Activated naive CD4-positive, alpha-beta T cell treated with anti-CD3 and anti-CD28 coated beads for 36 hours (primary cell): ENCODE measurements at regions of chr4 and their contacts with region 1.

Region 1: GRCh38 chr4:102578819-102579218 is 77.7 kb downstream of the NFKB1 start:
- DNase-seq: peak; percentile 24
- H3K4me3 Mint-ChIP-seq: no peak overlapping the region
- H3K27ac Mint-ChIP-seq: no peak overlapping the region
- H3K4me1 Mint-ChIP-seq: peaks cover 65% of the 10 kb centered on the region
- H3K27me3 Mint-ChIP-seq: no peaks in the 10 kb centered on the region

Region 2: DNA sequence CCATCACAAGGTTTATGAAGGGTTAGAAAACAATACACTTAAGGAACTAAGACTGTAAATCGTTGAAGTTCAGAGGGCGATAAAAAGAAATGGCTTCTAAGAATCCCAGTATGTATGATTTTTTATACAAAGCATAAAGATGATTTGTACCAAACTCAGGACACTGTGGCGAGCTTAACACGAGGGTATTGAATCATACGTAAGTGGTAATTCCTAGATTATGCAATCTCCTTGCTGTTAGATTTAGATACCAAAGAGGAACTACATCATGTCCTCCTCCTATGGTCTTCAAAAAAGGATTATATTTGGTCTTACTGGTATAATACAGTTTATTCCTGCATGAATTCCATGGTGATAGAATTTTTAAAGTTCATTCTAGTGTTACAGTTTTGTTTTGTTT is 53.7 kb before region 1 on chr4:
- CTCF ChIA-PET with region 1: interaction called, 3 read pairs
- intact Hi-C with region 1: loop called (anchors 2 kb)
- DNase-seq: peak; percentile 22
- H3K4me3 Mint-ChIP-seq: peak overlapping the region; percentile 47
- H3K27ac Mint-ChIP-seq: peak overlapping the region; percentile 83
- H3K4me1 Mint-ChIP-seq: peaks cover 88% of the 10 kb centered on the region
- H3K27me3 Mint-ChIP-seq: no peaks in the 10 kb centered on the region

Region 3: DNA sequence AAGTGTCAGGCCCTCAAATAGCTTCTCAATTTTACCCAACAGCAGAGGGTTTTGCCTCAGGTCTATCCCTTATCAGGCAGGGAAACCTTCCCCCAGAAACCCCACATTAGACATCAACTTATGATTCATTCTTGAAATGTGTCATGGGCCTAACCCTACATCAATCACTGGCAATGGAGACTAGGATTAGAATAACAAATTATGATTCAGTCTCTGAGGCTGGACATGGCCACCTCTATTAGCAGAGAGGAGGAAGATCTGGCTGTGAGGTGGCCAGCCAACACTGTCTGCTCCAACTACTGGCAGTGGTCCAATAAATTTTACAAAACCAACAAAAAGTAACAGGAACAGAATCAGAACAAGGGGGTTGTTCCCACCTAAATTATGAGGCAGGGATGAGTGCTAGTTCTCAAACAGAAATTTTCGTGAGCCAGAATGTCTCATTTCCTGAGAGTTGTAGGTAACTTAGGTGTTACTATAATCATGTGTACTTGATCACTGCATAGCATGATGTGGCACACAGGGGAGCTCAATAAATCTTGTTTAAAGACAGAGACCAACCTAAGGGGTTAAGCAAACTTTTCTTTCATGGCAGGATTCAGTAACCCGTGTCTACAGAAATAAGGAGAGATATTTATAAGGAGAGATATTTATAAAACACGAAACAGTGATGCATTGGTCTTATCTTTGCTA is 49.2 kb after region 1 on chr4:
- CTCF ChIA-PET with region 1: interaction called, 5 read pairs
- intact Hi-C with region 1: loop called (anchors 1 kb)
- DNase-seq: peak; percentile 62
- H3K4me3 Mint-ChIP-seq: peak overlapping the region; percentile 22
- H3K27ac Mint-ChIP-seq: peak overlapping the region; percentile 54
- H3K4me1 Mint-ChIP-seq: peaks cover 75% of the 10 kb centered on the region
- H3K27me3 Mint-ChIP-seq: no peaks in the 10 kb centered on the region

Region 4: DNA sequence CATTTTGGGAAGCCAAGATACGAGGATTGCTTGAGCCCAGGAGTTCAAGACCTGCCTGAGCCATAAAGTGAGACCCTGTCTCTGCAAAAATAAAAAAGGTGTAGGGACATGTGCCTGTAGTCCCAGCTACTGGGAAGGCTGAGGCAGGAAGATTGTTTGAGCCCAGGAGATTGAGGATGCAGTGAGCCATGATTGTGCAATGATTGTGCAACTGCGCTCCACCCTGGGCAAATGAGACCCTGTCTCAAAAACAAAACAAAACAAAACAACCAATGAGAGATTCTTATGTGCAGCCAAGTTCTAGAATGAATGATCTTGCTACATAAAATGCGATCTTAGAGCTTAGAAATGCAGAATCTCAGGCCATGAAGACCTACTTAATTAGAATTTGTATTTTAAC is 475.2 kb after region 1 on chr4:
- CTCF ChIA-PET with region 1: no interaction called
- intact Hi-C with region 1: no loop called
- DNase-seq: no peak
- H3K4me3 Mint-ChIP-seq: no peak overlapping the region
- H3K27ac Mint-ChIP-seq: no peak overlapping the region
- H3K4me1 Mint-ChIP-seq: peaks cover 15% of the 10 kb centered on the region
- H3K27me3 Mint-ChIP-seq: no peaks in the 10 kb centered on the region